ENCODE measurements at regions of chr6 and their contacts with region 1.

Region 1: GRCh38 chr6:158916617-158917016 is 83.4 kb downstream of the RSPH3 start:
- DNase-seq: no peak
- H3K4me3 ChIP-seq: no peak overlapping the region
- H3K27ac ChIP-seq: peak overlapping the region; percentile 55 to 60
- H3K4me1 ChIP-seq: no peaks in the 10 kb centered on the region
- H3K27me3 ChIP-seq: no peaks in the 10 kb centered on the region
- CTCF ChIP-seq: no peak
- POLR2A ChIP-seq: no peak

Region 2: GRCh38 chr6:158819213-158819909 is 97.3 kb before region 1 on chr6 and contains the start of gene EZR:
- intact Hi-C with region 1: loop called (anchors 2 kb)
- DNase-seq: peak; percentile 79
- H3K4me3 ChIP-seq: peak within 1 kb of the TSS; percentile 94 to 97
- H3K27ac ChIP-seq: peak within 1 kb of the TSS; percentile 99 to 100
- H3K4me1 ChIP-seq: peaks cover 8% of the 10 kb centered on the region
- H3K27me3 ChIP-seq: no peaks in the 10 kb centered on the region
- CTCF ChIP-seq: peak in 3 of 4 experiments; percentile 14 to 45 (median 28)
- POLR2A ChIP-seq: peak; percentile 81
- total RNA-seq, gene EZR: 118 to 222 TPM

Region 3: GRCh38 chr6:158869826-158870648 is 46.6 kb before region 1 on chr6:
- intact Hi-C with region 1: loop called (anchors 2 kb)
- DNase-seq: peak; percentile 92
- H3K4me3 ChIP-seq: peak overlapping the region; percentile 32 to 47
- H3K27ac ChIP-seq: peak overlapping the region; percentile 88 to 95
- H3K4me1 ChIP-seq: no peaks in the 10 kb centered on the region
- H3K27me3 ChIP-seq: no peaks in the 10 kb centered on the region
- CTCF ChIP-seq: peak in 2 of 4 experiments; percentile 38 to 43
- POLR2A ChIP-seq: peak; percentile 77

Region 4: GRCh38 chr6:158972241-158973233 is 55.9 kb after region 1 on chr6:
- intact Hi-C with region 1: loop called (anchors 5 kb)
- DNase-seq: peak; percentile 15
- H3K4me3 ChIP-seq: no peak overlapping the region
- H3K27ac ChIP-seq: no peak overlapping the region
- H3K4me1 ChIP-seq: no peaks in the 10 kb centered on the region
- H3K27me3 ChIP-seq: no peaks in the 10 kb centered on the region
- CTCF ChIP-seq: peak; percentile 23 to 86 (median 72)
- POLR2A ChIP-seq: no peak

Measured in prostate gland (tissue), 2 donors.